PC-9 (cell line): ENCODE measurements at regions of chr7 and their contacts with region 1.

Region 1: DNA sequence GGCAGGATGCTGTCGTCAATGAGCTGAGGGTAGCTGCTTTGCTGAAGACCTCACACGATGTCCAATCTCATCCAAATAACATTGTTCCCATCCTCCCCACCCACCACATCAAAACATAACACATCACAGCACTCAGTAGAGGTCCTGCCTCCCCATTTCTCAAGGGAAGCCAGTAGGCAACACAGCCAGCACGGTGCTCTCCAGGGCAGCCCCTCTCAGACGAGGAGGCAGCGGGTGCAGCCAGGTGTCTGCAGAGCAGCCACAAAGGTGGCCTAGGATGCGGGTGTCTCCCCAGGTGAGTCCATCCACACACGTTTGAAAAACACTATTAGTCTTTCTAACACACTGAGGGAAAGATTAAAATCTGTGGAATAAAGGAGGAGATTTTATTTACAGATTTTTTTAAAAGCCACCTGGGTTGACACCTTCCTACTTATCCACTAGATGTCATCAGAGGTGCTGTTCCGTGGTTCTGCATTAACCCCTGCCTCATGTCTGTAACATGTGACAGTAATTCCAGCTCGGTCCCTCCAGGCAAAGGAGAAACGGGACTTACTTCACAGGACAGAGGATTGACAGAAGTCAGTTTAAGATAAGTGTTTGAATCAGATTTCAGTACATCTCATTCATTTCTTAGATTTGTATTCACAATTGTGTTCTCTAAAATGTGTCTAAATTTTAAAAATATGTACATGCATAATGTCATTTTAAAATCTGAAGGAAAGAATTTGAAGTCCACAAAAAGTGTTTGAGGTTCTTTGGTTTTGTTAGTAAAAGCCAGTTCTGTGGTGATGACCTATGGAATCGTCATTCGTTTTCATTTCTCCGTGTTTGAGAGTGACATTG is 68.0 kb downstream of the LANCL2 start:
- DNase-seq: peak; percentile 47 to 79
- H3K4me3 ChIP-seq: no peak overlapping the region
- H3K27ac ChIP-seq: no peak overlapping the region
- H3K4me1 ChIP-seq: no peaks in the 10 kb centered on the region
- H3K27me3 ChIP-seq: no peaks in the 10 kb centered on the region
- CTCF ChIP-seq: peak; percentile 93

Region 2: DNA sequence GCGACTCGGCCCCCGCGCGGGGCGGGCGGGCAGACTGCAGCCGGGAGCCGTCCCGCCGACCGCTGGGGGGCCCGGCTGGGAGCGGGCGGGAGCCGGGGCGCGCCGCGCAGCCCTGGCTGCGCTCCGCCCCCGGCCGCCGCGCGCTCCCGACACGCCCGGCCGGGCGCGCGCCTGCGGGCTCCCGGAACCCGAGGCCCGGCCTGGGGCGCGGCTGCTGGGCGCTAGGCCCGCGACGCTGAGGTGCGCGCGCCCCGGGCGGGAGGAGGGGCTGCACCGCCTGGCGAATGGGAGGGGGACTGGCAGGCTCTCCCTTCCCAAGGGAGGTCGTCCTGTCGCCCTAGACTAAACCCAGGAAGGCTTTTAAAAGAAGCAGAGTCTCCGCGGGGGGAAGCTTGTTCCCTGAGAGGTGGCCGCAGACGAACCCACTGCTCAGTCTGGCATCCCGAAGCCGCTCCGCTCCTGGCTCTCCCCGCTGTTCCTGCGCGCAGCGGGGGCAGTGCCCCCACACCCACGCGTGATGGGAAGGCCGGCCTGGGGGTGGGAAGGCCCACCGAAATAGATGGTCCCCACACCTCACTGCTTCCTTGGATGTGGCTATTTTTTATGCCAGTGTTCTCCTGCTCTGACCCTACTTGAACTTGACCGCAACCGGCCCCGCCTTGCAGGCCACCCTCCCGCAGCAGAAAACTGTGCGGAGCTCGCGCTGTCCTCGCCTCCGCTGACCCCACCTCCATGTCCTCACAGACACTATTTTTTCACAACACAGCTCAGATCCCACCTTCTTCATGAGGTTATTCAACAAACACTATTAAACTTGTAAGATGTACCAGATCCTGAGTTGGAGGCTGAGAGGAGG is 139.4 kb after region 1 on chr7 and contains the start of gene VOPP1:
- CTCF ChIA-PET with region 1: no interaction called
- POLR2A ChIA-PET with region 1: no interaction called
- intact Hi-C with region 1: loop called (anchors 10 kb)
- DNase-seq: peak; percentile 59 to 84
- H3K4me3 ChIP-seq: peak within 1 kb of the TSS; percentile 91
- H3K27ac ChIP-seq: peak within 1 kb of the TSS; percentile 80
- H3K4me1 ChIP-seq: peaks cover 49% of the 10 kb centered on the region
- H3K27me3 ChIP-seq: no peaks in the 10 kb centered on the region
- CTCF ChIP-seq: no peak
- total RNA-seq, gene VOPP1: 200 and 207 TPM in 2 replicates

Region 3: GRCh38 chr7:55723621-55723941 is 290.4 kb after region 1 on chr7:
- CTCF ChIA-PET with region 1: interaction called, 10 read pairs
- POLR2A ChIA-PET with region 1: no interaction called
- intact Hi-C with region 1: loop called (anchors 10 kb)
- DNase-seq: no peak
- H3K4me3 ChIP-seq: no peak overlapping the region
- H3K27ac ChIP-seq: no peak overlapping the region
- H3K4me1 ChIP-seq: 0 out of 2 replicates have a peak, but pooled peaks cover 3% of the 10 kb centered on the region
- H3K27me3 ChIP-seq: no peaks in the 10 kb centered on the region
- CTCF ChIP-seq: no peak

Region 4: DNA sequence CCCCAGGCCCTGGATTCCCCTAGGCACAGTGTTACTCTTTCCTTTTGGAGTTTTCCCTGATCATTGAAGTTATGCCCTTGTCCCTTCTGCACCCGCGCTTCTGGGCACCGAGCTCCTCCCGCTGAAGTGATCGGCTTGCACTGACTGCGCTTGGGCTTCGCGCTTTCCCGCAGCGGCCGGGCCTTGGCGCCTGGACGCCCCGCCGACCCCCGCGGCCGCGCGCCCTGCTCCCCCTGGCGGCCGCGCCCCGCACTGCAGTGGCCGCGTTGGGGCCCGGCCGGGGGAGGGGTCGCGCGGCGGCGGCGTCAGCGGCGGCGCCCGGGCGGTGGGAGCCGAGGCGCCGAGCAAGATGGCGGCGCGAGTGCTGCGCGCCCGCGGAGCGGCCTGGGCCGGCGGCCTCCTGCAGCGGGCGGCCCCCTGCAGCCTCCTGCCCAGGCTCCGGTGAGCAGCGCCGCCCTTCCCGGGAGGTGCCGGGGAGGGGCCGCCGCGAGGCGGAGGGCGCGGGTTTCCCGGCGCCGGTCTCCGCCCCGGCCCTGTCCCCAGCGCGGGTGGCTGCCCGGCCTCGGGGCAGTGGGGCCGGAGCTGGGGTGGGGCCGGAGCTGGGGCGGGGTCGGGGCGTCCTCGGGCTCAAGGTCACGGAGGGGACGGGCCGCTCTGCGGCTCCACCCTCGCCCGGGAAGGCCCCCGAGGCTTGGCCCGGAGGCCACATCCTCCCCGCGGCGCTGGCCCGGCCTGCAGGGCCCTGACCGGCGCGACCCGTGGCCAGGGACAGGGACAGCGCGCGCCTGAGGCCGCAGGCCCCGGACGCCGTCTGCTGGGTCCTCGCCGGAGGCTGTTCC is 531.3 kb after region 1 on chr7 and contains the start of gene NIPSNAP2:
- CTCF ChIA-PET with region 1: no interaction called
- POLR2A ChIA-PET with region 1: no interaction called
- intact Hi-C with region 1: loop called (anchors 10 kb)
- DNase-seq: peak; percentile 63 to 89
- H3K4me3 ChIP-seq: peak within 1 kb of the TSS; percentile 67
- H3K27ac ChIP-seq: peak within 1 kb of the TSS; percentile 54
- H3K4me1 ChIP-seq: peaks cover 19% of the 10 kb centered on the region
- H3K27me3 ChIP-seq: no peaks in the 10 kb centered on the region
- CTCF ChIP-seq: peak; percentile 64
- total RNA-seq, gene NIPSNAP2: 96.1 and 97.5 TPM in 2 replicates

Region 5: GRCh38 chr7:56074371-56074791 is 641.2 kb after region 1 on chr7:
- CTCF ChIA-PET with region 1: no interaction called
- POLR2A ChIA-PET with region 1: no interaction called
- intact Hi-C with region 1: loop called (anchors 1 kb)
- DNase-seq: peak; percentile 86 to 95
- H3K4me3 ChIP-seq: no peak overlapping the region
- H3K27ac ChIP-seq: no peak overlapping the region
- H3K4me1 ChIP-seq: peaks cover 29% of the 10 kb centered on the region
- H3K27me3 ChIP-seq: no peaks in the 10 kb centered on the region
- CTCF ChIP-seq: peak; percentile 100